Left cardiac atrium (tissue), 4 donors: ENCODE measurements at regions of chr1 and their contacts with region 1.

Region 1: GRCh38 chr1:84944767-84945486 is 51.9 kb upstream of the LPAR3 start:
- DNase-seq: peak; percentile 60
- ATAC-seq: peak; percentile 96 to 97

Region 2: DNA sequence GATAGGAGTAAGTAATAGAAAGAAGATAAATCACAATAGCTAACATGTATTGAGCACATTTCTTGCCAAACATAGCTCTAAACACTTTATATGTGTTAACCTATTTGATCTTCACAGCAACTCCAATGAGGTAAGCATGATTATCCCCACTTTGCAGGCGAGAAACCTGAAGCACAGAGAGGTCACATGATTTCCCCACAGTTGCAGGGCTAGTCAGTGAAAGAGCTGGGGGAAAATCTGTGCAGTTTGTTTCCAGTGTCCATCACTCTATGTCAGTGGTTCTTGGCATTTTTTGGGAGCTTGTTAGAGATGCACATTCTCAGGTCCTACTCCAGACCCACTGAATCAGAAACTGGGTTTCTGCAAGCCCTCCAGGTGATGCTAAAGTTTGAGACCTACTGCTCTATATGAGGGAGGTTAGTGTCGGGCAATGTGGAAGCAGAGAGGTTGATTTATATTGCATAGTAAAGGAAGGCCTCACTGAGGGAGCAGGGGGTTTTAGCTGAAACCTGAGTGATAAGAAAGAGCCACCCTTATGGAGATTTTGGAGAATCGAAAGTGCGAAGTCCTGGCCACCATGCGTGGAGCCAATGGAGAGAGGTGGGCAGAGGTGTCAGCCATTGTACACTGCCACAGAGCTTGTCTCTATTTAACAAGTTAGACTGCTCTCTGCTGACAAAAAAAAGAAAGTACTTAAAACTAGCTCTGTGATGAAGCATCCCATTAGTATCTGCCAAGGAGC is 82.5 kb after region 1 on chr1:
- intact Hi-C with region 1: loop called (anchors 5 to 10 kb)
- DNase-seq: no peak
- ATAC-seq: peak; percentile 57 to 85

Region 3: DNA sequence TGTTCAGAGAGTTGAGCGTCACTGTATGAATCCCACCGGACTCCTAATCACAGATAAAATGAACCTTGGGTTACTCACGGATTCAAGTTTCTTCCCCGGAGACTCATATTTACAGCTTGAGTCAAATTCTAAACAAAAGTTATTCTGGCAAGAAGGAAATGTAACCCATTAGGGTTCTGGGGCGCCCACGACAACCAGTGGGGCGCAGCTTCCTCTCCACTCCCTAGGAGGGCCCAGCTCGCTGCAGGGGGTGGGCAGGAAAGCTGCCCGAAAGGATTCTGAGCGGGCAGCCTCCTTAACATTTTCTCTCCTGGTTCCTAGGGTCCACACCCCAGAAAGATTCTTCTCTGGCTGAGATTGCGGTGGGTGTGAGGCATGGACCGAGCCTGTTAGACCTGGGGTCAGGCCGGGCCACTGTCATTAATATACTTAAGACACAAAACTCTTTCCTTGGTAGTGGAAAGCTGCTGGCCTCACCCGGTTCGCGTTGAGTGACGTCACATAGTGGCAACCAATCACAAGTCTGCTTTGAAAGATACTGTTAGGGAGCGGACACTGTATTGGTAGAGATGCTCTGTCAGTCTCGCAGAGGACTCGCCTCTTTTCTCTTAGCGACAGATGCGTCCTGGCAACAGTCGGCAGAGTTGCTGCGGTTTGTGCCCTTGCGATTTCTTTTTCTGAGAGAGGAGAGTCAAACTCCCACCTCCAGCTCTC is 116.9 kb after region 1 on chr1:
- intact Hi-C with region 1: loop called in 1 of 2 experiments (anchors 10 kb)
- DNase-seq: peak; percentile 92
- ATAC-seq: peak; percentile 100